Common myeloid progenitor, CD34-positive (primary cell): ENCODE measurements at regions of chr1 and their contacts with region 1.

Region 1: GRCh38 chr1:27634177-27634984 is 604 bp downstream of the FGR start:
- DNase-seq: peak; percentile 56 to 85 (median 80)
- H3K4me3 ChIP-seq: peak overlapping the region; percentile 28 to 80 (median 67)
- H3K27ac ChIP-seq: peak overlapping the region in 1 of 2 experiments; percentile 67
- H3K4me1 ChIP-seq: peaks cover 18 to 71% (median 67%) of the 10 kb centered on the region in 4 experiments
- H3K27me3 ChIP-seq: no peaks in the 10 kb centered on the region

Region 2: GRCh38 chr1:27525296-27526272 is 108.8 kb before region 1 on chr1:
- CTCF ChIA-PET with region 1: no interaction called
- POLR2A ChIA-PET with region 1: no interaction called
- DNase-seq: peak; percentile 52 to 80 (median 74)
- H3K4me3 ChIP-seq: peak overlapping the region; percentile 23 to 76 (median 67)
- H3K27ac ChIP-seq: peak overlapping the region; percentile 40 to 78
- H3K4me1 ChIP-seq: peaks cover 13 to 90% (median 86%) of the 10 kb centered on the region in 4 experiments
- H3K27me3 ChIP-seq: no peaks in the 10 kb centered on the region

Region 3: DNA sequence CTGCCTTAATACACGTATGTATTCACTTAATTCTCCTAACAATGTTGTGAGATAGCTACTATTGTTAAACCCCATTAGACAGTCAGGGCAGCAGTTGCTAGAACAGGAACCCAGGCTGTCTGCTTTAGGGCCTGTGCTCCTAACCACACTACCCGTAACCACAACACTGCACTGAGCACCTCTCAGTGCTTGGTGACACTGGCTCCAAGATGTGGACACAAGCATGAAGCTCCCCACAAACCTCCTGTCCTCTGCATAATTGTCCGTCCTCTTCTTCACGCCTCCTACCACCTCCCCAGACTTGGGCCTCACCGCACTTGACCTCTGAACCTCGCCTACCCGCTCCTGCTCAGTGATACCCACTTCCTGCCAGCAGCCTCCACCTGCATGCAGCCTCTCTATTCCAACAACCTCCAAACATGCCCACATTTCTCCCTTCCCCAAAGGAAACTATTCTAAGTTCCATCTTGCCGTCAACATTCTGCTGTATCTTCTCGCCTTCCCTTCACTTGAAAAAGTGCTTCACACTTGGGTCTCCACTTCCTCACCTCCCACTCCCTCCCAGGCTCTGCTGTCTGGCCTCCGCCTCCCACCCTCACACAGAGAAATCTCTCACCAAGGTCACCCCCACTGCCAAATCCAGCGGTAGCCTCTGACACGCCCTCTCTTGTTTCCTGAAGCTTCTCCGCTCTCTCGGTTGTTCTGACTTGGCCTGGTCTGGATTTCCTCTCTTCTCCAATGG is 15.9 kb before region 1 on chr1:
- CTCF ChIA-PET with region 1: interaction called, 297 read pairs
- POLR2A ChIA-PET with region 1: interaction called, 10 read pairs
- DNase-seq: peak; percentile 47 to 92 (median 90)
- H3K4me3 ChIP-seq: no peak overlapping the region
- H3K27ac ChIP-seq: peak overlapping the region in 1 of 2 experiments; percentile 68
- H3K4me1 ChIP-seq: peaks cover 10 to 62% (median 42%) of the 10 kb centered on the region in 4 experiments
- H3K27me3 ChIP-seq: no peaks in the 10 kb centered on the region

Region 4: GRCh38 chr1:27650539-27651175 is 16.3 kb after region 1 on chr1:
- CTCF ChIA-PET with region 1: interaction called, 14 read pairs
- POLR2A ChIA-PET with region 1: no interaction called
- DNase-seq: peak in 1 of 3 donors; percentile 32
- H3K4me3 ChIP-seq: no peak overlapping the region
- H3K27ac ChIP-seq: no peak overlapping the region
- H3K4me1 ChIP-seq: peaks cover 0 to 34% (median 14%) of the 10 kb centered on the region in 4 experiments
- H3K27me3 ChIP-seq: no peaks in the 10 kb centered on the region